HEK293T (cell line): ENCODE measurements at regions of chr2 and their contacts with region 1.

Region 1: GRCh38 chr2:169732075-169732474 is 1.6 kb upstream of the KLHL23 start:
- DNase-seq: no peak

Region 2: DNA sequence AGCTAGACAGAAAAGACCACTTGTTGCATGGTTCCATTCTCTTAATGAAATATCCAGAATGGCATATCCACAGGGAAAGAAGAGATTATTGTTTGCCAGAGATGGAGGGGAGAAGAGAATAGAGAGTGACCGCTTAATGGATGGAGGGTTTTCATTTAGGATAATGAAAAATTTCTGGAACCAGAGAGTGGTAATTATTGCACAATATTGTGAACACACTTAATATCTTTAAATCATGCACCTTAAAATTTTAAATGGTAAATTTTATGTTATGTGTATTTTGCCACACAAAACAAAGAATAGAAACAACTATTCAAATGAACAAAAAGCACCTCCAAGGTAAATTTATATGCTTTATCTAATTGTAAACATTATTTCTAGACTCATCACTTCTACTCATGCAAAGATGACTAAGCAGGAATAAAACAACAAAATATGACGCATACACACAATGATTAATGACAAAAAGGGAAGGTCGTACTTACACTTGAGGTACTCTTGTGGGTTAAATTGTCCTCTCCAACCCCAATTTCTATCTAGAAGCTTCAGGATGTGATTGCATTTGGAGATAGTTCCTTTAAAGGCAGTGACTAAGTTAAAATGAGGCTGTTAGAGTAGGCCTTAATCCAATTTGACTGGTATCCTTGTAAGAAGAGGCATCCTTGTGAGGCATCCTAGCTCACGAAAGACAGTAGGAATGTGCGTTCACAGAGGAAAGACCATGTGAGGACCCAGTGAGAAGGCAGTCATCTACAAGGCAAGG is 681.4 kb before region 1 on chr2:
- CTCF ChIA-PET with region 1: interaction called, 10 read pairs
- POLR2A ChIA-PET with region 1: no interaction called
- DNase-seq: no peak

Region 3: DNA sequence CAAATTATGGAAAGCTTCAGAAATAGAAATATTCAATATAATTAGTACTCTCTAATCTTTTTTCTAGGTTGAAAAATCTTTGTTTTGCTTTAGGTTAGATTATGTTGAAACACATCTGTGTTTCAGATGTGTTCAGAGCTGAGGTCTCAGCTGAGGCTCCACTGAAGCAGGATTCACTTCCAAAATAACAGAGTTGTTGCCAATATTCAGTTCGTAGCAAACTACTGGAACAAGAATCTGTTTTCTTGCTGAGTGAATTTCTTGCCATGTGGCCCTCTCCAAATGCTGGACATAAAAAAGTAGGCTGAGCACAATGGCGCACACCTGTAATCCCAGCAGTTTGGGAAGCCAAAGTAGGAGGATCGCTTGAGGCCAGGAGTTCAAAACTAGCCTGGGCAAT is 29.1 kb before region 1 on chr2:
- CTCF ChIA-PET with region 1: no interaction called
- POLR2A ChIA-PET with region 1: no interaction called
- DNase-seq: no peak

Region 4: GRCh38 chr2:169721016-169721415 is 11.1 kb before region 1 on chr2:
- CTCF ChIA-PET with region 1: no interaction called
- POLR2A ChIA-PET with region 1: no interaction called
- DNase-seq: no peak